GM12878 (cell line): ENCODE measurements at regions of chr12 and their contacts with region 1.

Region 1: GRCh38 chr12:54259194-54260011 is 20.5 kb downstream of the CBX5 start:
- DNase-seq: peak; percentile 42
- ATAC-seq: peak; percentile 97
- H3K4me3 ChIP-seq: peak overlapping the region; percentile 48
- H3K27ac ChIP-seq: peak overlapping the region; percentile 30
- H3K4me1 ChIP-seq: peaks cover 17% of the 10 kb centered on the region
- H3K27me3 ChIP-seq: no peaks in the 10 kb centered on the region
- CTCF ChIP-seq: no peak
- EP300 ChIP-seq: peak in 1 of 2 experiments; percentile 56; a peak in 1 of 4 replicates
- POLR2A ChIP-seq: no peak
- RAD21 ChIP-seq: no peak

Region 2: DNA sequence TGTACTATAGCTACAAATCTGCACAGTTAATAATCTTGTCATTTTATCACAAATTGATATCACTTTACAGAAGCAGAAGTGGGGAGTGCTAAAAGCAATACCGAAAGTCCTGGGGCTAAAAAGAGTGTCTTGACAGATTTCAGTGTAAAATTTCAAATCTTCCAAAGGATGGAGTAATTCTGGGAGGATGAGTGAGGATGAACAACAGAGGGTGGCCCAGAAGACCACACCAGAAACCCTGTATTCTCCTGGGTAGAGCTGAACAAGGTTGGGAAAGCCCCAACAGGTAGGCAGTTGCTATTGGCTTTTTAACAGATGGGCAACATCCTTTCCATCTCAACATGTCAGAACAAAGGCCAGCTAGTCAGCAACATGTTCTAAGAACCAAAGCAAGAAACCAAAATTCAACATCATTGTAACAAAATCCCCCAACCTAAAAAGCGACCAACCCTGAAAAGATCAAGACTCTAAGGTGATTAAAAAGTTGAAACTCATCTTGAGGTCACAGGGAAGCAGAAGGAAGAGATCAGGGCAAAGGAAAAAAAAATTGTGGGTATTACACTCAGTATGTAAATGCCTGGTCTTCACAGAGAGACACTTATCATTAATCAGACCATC is 18.3 kb before region 1 on chr12:
- CTCF ChIA-PET with region 1: interaction called, 4 read pairs
- POLR2A ChIA-PET with region 1: interaction called, 19 read pairs
- RAD21 ChIA-PET with region 1: interaction called, 14 read pairs
- SMC1A ChIA-PET with region 1: interaction called, 25 read pairs
- in situ Hi-C with region 1: no loop called
- intact Hi-C with region 1: no loop called
- DNase-seq: peak; percentile 80
- ATAC-seq: peak; percentile 95
- H3K4me3 ChIP-seq: no peak overlapping the region
- H3K27ac ChIP-seq: peak overlapping the region; percentile 45
- H3K4me1 ChIP-seq: peaks cover 16% of the 10 kb centered on the region
- H3K27me3 ChIP-seq: no peaks in the 10 kb centered on the region
- CTCF ChIP-seq: no peak
- EP300 ChIP-seq: 0 out of 4 replicates have a peak, but pooled peaks of 1 of the 2 experiments have one; percentile 39
- POLR2A ChIP-seq: no peak
- RAD21 ChIP-seq: no peak

Region 3: DNA sequence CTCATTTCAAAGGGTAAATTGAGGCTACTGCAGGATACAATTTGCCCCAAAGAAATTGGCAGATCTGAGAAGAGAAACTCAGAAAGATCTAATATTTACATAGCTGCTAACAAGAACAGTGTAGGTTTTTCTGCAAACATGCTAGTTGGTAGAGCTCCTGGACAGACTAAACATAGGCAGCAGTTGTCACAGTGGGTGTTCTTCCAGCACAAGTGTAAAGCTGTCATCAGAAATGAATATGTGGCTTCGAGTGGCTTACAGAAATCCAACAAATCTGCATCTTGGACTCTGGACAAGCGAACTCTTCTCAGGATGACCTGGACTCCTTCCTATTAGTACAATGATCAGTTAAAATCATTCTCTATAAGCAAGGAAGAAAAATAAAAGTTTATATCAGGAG is 14.6 kb after region 1 on chr12:
- CTCF ChIA-PET with region 1: interaction called, 49 read pairs
- POLR2A ChIA-PET with region 1: interaction called, 60 read pairs
- RAD21 ChIA-PET with region 1: interaction called, 39 read pairs
- SMC1A ChIA-PET with region 1: interaction called, 28 read pairs
- in situ Hi-C with region 1: no loop called
- intact Hi-C with region 1: loop called (anchors 2 kb)
- DNase-seq: no peak
- ATAC-seq: no peak
- H3K4me3 ChIP-seq: no peak overlapping the region
- H3K27ac ChIP-seq: no peak overlapping the region
- H3K4me1 ChIP-seq: peaks cover 25% of the 10 kb centered on the region
- H3K27me3 ChIP-seq: no peaks in the 10 kb centered on the region
- CTCF ChIP-seq: no peak
- EP300 ChIP-seq: no peak
- POLR2A ChIP-seq: no peak
- RAD21 ChIP-seq: no peak

Region 4: GRCh38 chr12:54279866-54280467 is 20.6 kb after region 1 on chr12 and contains the start of gene CBX5:
- CTCF ChIA-PET with region 1: interaction called, 49 read pairs
- POLR2A ChIA-PET with region 1: interaction called, 60 read pairs
- RAD21 ChIA-PET with region 1: interaction called, 39 read pairs
- SMC1A ChIA-PET with region 1: interaction called, 32 read pairs
- in situ Hi-C with region 1: no loop called
- intact Hi-C with region 1: loop called (anchors 2 kb)
- DNase-seq: peak; percentile 98
- ATAC-seq: peak; percentile 48
- H3K4me3 ChIP-seq: peak within 1 kb of the TSS; percentile 81
- H3K27ac ChIP-seq: peak within 1 kb of the TSS; percentile 99
- H3K4me1 ChIP-seq: peaks cover 18% of the 10 kb centered on the region
- H3K27me3 ChIP-seq: no peaks in the 10 kb centered on the region
- CTCF ChIP-seq: no peak
- EP300 ChIP-seq: no peak
- POLR2A ChIP-seq: peak; percentile 83
- RAD21 ChIP-seq: no peak
- polyA plus RNA-seq, gene CBX5: 66.9 to 67.1 TPM

Region 5: GRCh38 chr12:54285150-54286041 is 26.0 kb after region 1 on chr12:
- CTCF ChIA-PET with region 1: interaction called, 63 read pairs
- POLR2A ChIA-PET with region 1: interaction called, 60 read pairs
- RAD21 ChIA-PET with region 1: interaction called, 39 read pairs
- SMC1A ChIA-PET with region 1: interaction called, 32 read pairs
- in situ Hi-C with region 1: no loop called
- intact Hi-C with region 1: no loop called
- DNase-seq: no peak
- ATAC-seq: no peak
- H3K4me3 ChIP-seq: peak overlapping the region; percentile 37; the same call in 1 of the 2 replicates
- H3K27ac ChIP-seq: no peak overlapping the region
- H3K4me1 ChIP-seq: peaks cover 3% of the 10 kb centered on the region; the same call in 1 of the 2 replicates
- H3K27me3 ChIP-seq: no peaks in the 10 kb centered on the region
- CTCF ChIP-seq: peak in 1 of 3 experiments; percentile 23; a peak in 3 of 6 replicates
- EP300 ChIP-seq: no peak
- POLR2A ChIP-seq: no peak
- RAD21 ChIP-seq: no peak

Region 6: DNA sequence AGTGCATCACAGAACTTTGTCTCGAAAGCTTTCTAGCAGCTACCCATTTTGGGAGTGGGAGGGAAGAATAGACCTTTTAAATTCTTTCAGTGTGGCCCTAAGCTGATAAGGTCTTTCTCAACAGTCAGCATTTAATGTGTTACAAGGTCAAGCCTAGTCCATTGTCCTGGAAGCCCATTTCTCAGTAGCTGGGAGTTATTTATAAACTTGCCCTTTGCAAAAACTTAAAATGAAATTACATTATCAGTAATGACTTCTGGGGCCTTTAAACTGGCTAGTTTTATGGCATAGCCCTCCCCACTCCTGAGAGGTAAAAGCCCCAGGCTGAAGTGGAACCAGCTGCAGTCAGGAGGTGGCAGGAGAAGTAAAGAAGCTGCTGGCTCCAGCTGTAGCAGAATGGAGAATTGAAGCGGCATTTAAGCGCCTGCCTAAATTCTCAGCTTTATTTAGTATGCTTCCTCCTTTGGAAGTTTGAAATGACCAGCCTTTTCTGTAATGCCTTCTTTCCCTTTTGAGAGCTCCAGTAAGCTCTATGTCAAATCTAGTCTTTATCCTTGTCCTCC is 78.0 kb after region 1 on chr12:
- CTCF ChIA-PET with region 1: interaction called, 21 read pairs
- POLR2A ChIA-PET with region 1: interaction called, 3 read pairs
- RAD21 ChIA-PET with region 1: no interaction called
- SMC1A ChIA-PET with region 1: interaction called, 3 read pairs
- in situ Hi-C with region 1: no loop called
- intact Hi-C with region 1: no loop called
- DNase-seq: no peak
- ATAC-seq: no peak
- H3K4me3 ChIP-seq: no peak overlapping the region
- H3K27ac ChIP-seq: no peak overlapping the region
- H3K4me1 ChIP-seq: no peaks in the 10 kb centered on the region
- H3K27me3 ChIP-seq: no peaks in the 10 kb centered on the region
- CTCF ChIP-seq: 0 out of 6 replicates have a peak, but pooled peaks of 1 of the 3 experiments have one; percentile 5
- EP300 ChIP-seq: no peak
- POLR2A ChIP-seq: no peak
- RAD21 ChIP-seq: 0 out of 2 replicates have a peak, but pooled peaks have one; percentile 16

Region 7: DNA sequence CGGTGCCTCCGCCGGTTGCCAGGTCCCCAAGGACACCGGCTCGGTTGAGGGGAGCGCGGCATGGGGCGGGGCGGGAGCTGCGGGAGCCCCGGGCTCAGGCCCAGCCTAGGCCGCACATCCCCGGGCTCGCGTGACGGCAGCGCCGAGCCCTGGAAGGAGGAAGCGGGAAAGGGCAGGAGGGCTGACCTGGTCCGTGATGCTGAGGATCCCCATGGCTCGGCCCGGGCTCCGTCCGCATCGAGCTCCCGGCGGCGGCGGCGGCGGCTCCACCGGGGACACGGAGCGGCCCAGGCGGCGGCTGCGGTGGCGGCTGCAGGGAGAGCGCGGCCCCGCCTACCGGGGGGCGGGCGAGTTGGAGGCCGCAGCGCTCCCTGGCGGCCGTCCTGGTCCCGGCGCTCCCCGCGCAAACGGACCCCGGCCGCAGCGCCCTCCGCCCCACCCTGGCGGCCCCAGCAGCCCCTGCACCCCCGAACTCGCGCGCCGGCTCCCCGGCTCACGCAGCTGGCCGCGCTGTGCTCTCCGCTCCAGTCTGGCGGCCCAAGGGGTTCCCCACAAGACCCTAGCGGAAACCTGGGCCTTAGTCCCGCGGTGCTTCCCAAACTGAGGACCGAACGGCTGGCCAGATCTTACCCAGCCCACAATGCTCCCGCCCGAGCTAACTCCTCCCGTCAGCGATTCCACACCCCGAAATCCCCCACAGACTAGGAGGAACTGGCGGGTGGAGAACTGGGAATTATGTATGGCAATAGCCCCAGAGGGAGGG is 1998.8 kb after region 1 on chr12 and contains the start of gene ANKRD52:
- CTCF ChIA-PET with region 1: no interaction called
- POLR2A ChIA-PET with region 1: interaction called, 11 read pairs
- RAD21 ChIA-PET with region 1: no interaction called
- SMC1A ChIA-PET with region 1: no interaction called
- in situ Hi-C with region 1: no loop called
- intact Hi-C with region 1: no loop called
- DNase-seq: no peak
- ATAC-seq: peak; percentile 98
- H3K4me3 ChIP-seq: peak within 1 kb of the TSS; percentile 95
- H3K27ac ChIP-seq: peak within 1 kb of the TSS; percentile 73
- H3K4me1 ChIP-seq: peaks cover 7% of the 10 kb centered on the region
- H3K27me3 ChIP-seq: no peaks in the 10 kb centered on the region
- CTCF ChIP-seq: peak; percentile 54 to 84 (median 57); a peak in 5 of 6 replicates
- EP300 ChIP-seq: 0 out of 4 replicates have a peak, but pooled peaks of 1 of the 2 experiments have one; percentile 12
- POLR2A ChIP-seq: peak; percentile 71
- RAD21 ChIP-seq: no peak
- polyA plus RNA-seq, gene ANKRD52: 0.90 to 1.2 TPM